Vagina (tissue), 2 donors: ENCODE measurements at regions of chr9 and their contacts with region 1.

Region 1: GRCh38 chr9:28264368-28264767 is 691.1 kb upstream of the C9orf72 start:
- DNase-seq: no peak
- H3K4me3 ChIP-seq: no peak overlapping the region
- H3K27ac ChIP-seq: no peak overlapping the region
- H3K4me1 ChIP-seq: no peaks in the 10 kb centered on the region
- H3K27me3 ChIP-seq: no peaks in the 10 kb centered on the region
- CTCF ChIP-seq: no peak
- POLR2A ChIP-seq: no peak

Region 2: DNA sequence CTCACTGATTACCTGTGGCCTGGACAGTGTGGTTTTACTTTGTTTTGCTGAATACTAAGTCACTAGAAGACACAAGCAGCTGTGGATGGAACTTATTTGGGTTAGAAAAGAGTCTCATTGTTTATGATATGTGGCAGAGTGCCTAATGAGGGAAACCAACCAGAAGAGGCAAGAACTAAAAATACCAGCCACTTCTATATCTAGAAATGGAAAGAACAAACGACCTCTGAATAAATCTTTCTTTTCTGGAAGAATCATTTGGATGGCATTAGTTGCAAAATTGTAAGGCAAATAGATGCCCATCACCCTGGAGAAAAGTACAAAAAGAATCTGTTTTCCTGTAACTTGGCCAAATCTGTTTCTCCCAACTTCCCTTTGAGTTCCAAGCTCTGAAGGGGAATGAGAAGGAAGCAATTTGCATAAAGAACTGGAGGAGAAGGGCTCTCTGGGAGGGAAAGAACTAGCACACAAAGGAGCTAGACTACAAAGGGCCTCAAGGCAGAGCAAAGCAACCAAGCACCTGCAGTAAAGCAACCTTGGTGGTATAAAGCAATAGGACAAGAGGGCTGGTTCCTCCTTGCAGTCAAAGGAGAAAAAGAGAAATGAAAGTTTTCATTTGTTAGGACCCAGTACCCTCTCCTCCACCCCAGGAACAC is 1827.2 kb before region 1 on chr9:
- intact Hi-C with region 1: loop called (anchors 5 kb)
- DNase-seq: no peak
- H3K4me3 ChIP-seq: no peak overlapping the region
- H3K27ac ChIP-seq: no peak overlapping the region
- H3K4me1 ChIP-seq: no peaks in the 10 kb centered on the region
- H3K27me3 ChIP-seq: no peaks in the 10 kb centered on the region
- CTCF ChIP-seq: no peak
- POLR2A ChIP-seq: no peak

Region 3: GRCh38 chr9:28212610-28213378 is 51.6 kb before region 1 on chr9:
- intact Hi-C with region 1: no loop called
- DNase-seq: no peak
- H3K4me3 ChIP-seq: no peak overlapping the region
- H3K27ac ChIP-seq: no peak overlapping the region
- H3K4me1 ChIP-seq: no peaks in the 10 kb centered on the region
- H3K27me3 ChIP-seq: no peaks in the 10 kb centered on the region
- CTCF ChIP-seq: no peak
- POLR2A ChIP-seq: no peak

Region 4: GRCh38 chr9:28329323-28329722 is 65.0 kb after region 1 on chr9:
- intact Hi-C with region 1: no loop called
- DNase-seq: no peak
- H3K4me3 ChIP-seq: no peak overlapping the region
- H3K27ac ChIP-seq: no peak overlapping the region
- H3K4me1 ChIP-seq: no peaks in the 10 kb centered on the region
- H3K27me3 ChIP-seq: no peaks in the 10 kb centered on the region
- CTCF ChIP-seq: no peak
- POLR2A ChIP-seq: no peak